ENCODE measurements at regions of chr12 and their contacts with region 1.

Region 1: DNA sequence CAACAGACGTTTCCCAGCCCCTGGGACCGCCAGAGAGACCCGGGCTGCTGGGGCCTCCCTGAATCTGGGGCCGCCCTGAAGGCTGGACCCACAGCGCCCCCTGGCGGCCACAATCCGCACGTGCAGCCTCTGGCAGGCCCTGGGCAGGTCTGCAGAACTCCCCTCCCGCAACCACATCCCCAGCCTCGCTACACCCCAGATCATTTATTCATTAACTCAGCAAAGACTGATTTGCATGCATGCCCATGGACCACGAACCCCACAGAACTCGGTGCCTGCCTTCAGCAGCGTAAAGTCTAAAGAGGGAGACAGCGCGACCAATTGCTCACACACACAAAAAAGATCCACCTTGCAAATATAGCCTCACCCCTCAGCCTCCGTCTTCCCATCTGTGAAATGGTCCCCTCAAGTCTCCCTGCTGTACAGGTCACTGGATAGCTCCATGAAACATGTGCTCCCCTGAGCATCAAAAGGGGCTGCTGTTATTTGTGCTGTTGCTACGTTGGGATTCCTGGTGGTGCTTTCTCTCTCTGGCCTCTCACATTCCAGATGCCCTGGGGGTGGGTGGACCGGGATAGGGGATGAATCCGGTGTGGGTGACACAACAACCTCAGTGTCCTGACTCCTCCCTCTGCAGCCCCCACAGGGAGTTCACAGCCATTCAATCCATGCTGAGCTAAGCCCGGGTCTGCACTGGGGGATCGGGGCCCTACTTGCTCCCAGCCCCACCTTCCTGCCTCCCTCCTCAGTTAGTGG is 96.4 kb downstream of the SCARB1 start:
- DNase-seq: peak; percentile 53
- ATAC-seq: peak; percentile 64
- H3K4me3 ChIP-seq: no peak overlapping the region
- H3K27ac ChIP-seq: peak overlapping the region; percentile 14; the same call in 1 of the 2 replicates
- H3K4me1 ChIP-seq: peaks cover 29% of the 10 kb centered on the region
- H3K27me3 ChIP-seq: no peaks in the 10 kb centered on the region
- CTCF ChIP-seq: peak; percentile 92
- POLR2A ChIP-seq: no peak
- RAD21 ChIP-seq: peak; percentile 96

Region 2: GRCh38 chr12:124053851-124054250 is 713.4 kb before region 1 on chr12:
- CTCF ChIA-PET with region 1: no interaction called
- POLR2A ChIA-PET with region 1: no interaction called
- dilution Hi-C with region 1: no loop called
- in situ Hi-C with region 1: no loop called
- intact Hi-C with region 1: loop called (anchors 5 kb)
- DNase-seq: peak; percentile 48
- ATAC-seq: peak; percentile 83
- H3K4me3 ChIP-seq: no peak overlapping the region
- H3K27ac ChIP-seq: no peak overlapping the region
- H3K4me1 ChIP-seq: no peaks in the 10 kb centered on the region
- H3K27me3 ChIP-seq: peaks cover 6% of the 10 kb centered on the region
- CTCF ChIP-seq: peak; percentile 61
- POLR2A ChIP-seq: no peak
- RAD21 ChIP-seq: peak; percentile 65

Region 3: GRCh38 chr12:124311292-124312109 is 455.7 kb before region 1 on chr12:
- CTCF ChIA-PET with region 1: no interaction called
- POLR2A ChIA-PET with region 1: no interaction called
- dilution Hi-C with region 1: no loop called
- in situ Hi-C with region 1: no loop called
- intact Hi-C with region 1: no loop called
- DNase-seq: no peak
- ATAC-seq: no peak
- H3K4me3 ChIP-seq: no peak overlapping the region
- H3K27ac ChIP-seq: no peak overlapping the region
- H3K4me1 ChIP-seq: no peaks in the 10 kb centered on the region
- H3K27me3 ChIP-seq: peaks cover 49% of the 10 kb centered on the region
- CTCF ChIP-seq: no peak
- POLR2A ChIP-seq: no peak
- RAD21 ChIP-seq: no peak

Region 4: GRCh38 chr12:124379938-124380754 is 387.1 kb before region 1 on chr12:
- CTCF ChIA-PET with region 1: no interaction called
- POLR2A ChIA-PET with region 1: no interaction called
- dilution Hi-C with region 1: no loop called
- in situ Hi-C with region 1: loop called (anchors 5 kb)
- intact Hi-C with region 1: loop called (anchors 5 kb)
- DNase-seq: peak; percentile 89
- ATAC-seq: peak; percentile 74
- H3K4me3 ChIP-seq: no peak overlapping the region
- H3K27ac ChIP-seq: peak overlapping the region; percentile 80
- H3K4me1 ChIP-seq: peaks cover 42% of the 10 kb centered on the region
- H3K27me3 ChIP-seq: no peaks in the 10 kb centered on the region
- CTCF ChIP-seq: peak; percentile 62
- POLR2A ChIP-seq: no peak; the same call in 1 of the 2 replicates
- RAD21 ChIP-seq: peak; percentile 58

Region 5: GRCh38 chr12:124422570-124423523 is 344.4 kb before region 1 on chr12:
- CTCF ChIA-PET with region 1: interaction called, 3 read pairs
- POLR2A ChIA-PET with region 1: no interaction called
- dilution Hi-C with region 1: no loop called
- in situ Hi-C with region 1: no loop called
- intact Hi-C with region 1: loop called (anchors 1 kb)
- DNase-seq: peak; percentile 94
- ATAC-seq: peak; percentile 82
- H3K4me3 ChIP-seq: peak overlapping the region; percentile 10; the same call in 1 of the 2 replicates
- H3K27ac ChIP-seq: peak overlapping the region; percentile 87
- H3K4me1 ChIP-seq: peaks cover 32% of the 10 kb centered on the region
- H3K27me3 ChIP-seq: no peaks in the 10 kb centered on the region
- CTCF ChIP-seq: no peak
- POLR2A ChIP-seq: peak; percentile 52
- RAD21 ChIP-seq: peak; percentile 22

Region 6: GRCh38 chr12:124567661-124568373 is 199.4 kb before region 1 on chr12:
- CTCF ChIA-PET with region 1: interaction called, 5 read pairs
- POLR2A ChIA-PET with region 1: no interaction called
- dilution Hi-C with region 1: no loop called
- in situ Hi-C with region 1: loop called (anchors 5 kb)
- intact Hi-C with region 1: loop called (anchors 1 kb)
- DNase-seq: peak; percentile 94
- ATAC-seq: peak; percentile 83
- H3K4me3 ChIP-seq: peak overlapping the region; percentile 0
- H3K27ac ChIP-seq: peak overlapping the region; percentile 89
- H3K4me1 ChIP-seq: peaks cover 23% of the 10 kb centered on the region
- H3K27me3 ChIP-seq: no peaks in the 10 kb centered on the region
- CTCF ChIP-seq: peak; percentile 22; the same call in 1 of the 2 replicates
- POLR2A ChIP-seq: no peak
- RAD21 ChIP-seq: peak; percentile 3; the same call in 1 of the 2 replicates

Region 7: GRCh38 chr12:124680863-124681778 is 86.1 kb before region 1 on chr12:
- CTCF ChIA-PET with region 1: interaction called, 4 read pairs
- POLR2A ChIA-PET with region 1: no interaction called
- dilution Hi-C with region 1: no loop called
- in situ Hi-C with region 1: no loop called
- intact Hi-C with region 1: loop called (anchors 5 kb)
- DNase-seq: peak; percentile 95
- ATAC-seq: peak; percentile 76
- H3K4me3 ChIP-seq: no peak overlapping the region
- H3K27ac ChIP-seq: peak overlapping the region; percentile 74
- H3K4me1 ChIP-seq: peaks cover 38% of the 10 kb centered on the region
- H3K27me3 ChIP-seq: no peaks in the 10 kb centered on the region
- CTCF ChIP-seq: peak; percentile 51; the same call in 1 of the 2 replicates
- POLR2A ChIP-seq: no peak
- RAD21 ChIP-seq: peak; percentile 53